ENCODE measurements at regions of chr16 and their contacts with region 1.

Region 1: GRCh38 chr16:88569985-88570690 is at the start of gene ZC3H18:
- DNase-seq: peak; percentile 91 to 99 (median 92)

Region 2: DNA sequence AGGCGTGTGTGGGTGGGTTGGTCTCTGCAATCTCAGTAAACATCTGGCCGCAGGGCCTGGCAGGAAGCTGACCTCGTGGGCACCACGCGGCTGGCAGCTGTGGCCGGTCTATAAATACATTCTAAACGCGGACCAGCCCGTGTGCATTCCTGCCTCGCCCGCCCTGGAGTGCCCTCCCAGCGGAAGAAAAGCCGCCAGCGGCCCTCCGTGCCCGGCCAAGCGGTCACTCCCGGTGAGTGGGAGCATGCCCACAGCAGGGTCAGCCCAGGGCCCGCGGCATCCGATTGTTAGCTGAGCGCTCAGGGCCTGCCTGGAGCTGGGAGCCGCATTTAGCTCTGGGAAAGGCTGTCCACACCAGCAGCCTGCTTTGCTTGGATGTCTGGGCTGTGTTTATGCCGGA is 177.1 kb before region 1 on chr16:
- intact Hi-C with region 1: no loop called
- DNase-seq: peak in 4 of 10 donors; percentile 41 to 84 (median 46)

Region 3: GRCh38 chr16:88533932-88534732 is 36.0 kb before region 1 on chr16:
- intact Hi-C with region 1: loop called (anchors 5 kb)
- DNase-seq: peak in 9 of 10 donors; percentile 58 to 96 (median 64)

Region 4: GRCh38 chr16:88662843-88663606 is 92.9 kb after region 1 on chr16 and contains the start of gene MVD:
- intact Hi-C with region 1: loop called (anchors 1 kb)
- DNase-seq: peak; percentile 95 to 100 (median 98)

Region 5: DNA sequence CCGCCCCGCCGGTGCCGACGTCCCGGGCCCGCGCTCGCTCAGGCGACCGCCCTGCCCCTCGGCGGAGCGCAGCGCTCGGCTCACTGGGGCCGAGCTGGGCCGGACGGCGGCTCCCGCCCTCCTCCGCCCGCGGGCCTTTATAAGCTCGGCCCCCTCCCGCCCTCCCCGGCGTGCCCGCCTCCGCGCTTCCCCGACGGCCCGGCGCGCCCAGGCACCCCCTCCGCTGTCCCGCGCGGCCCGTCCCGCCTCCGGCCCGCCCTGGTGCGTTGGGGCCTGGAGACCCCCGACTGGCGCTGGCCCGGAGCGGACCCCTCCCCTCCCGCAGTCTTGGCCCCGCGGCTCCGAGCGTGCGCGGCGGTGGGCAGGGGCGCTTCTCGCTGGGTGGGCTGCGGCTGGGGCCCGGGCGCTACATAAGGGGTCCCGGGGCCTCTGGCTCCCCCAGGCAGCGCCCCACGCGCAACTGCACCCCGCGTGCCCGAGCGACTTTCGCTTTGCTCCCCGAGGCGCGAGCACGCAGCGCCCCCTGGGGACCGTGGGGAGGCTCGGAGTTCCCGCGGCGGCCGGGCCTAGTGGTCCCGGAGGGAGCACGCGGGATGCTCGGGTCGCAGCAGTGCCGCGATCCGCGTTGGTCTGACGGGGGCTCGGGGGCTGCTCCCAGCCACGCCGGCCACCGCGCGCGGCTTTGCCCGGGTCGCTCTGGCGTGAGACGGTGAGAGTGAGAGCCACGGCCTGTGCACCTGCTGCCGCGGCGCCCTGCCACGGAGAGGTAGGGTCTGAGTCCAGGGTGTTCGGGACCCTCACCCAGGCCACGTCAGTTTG is 215.2 kb after region 1 on chr16 and contains the start of gene PIEZO1:
- intact Hi-C with region 1: loop called (anchors 10 kb)
- DNase-seq: peak in 8 of 10 donors; percentile 53 to 94 (median 66)